Sciatic nerve (tissue), 2 donors: ENCODE measurements at regions of chr16 and their contacts with region 1.

Region 1: GRCh38 chr16:30429678-30430427 is at the start of gene DCTPP1:
- DNase-seq: peak; percentile 97
- ATAC-seq: peak; percentile 99
- total RNA-seq, gene DCTPP1: 20.4 TPM

Region 2: DNA sequence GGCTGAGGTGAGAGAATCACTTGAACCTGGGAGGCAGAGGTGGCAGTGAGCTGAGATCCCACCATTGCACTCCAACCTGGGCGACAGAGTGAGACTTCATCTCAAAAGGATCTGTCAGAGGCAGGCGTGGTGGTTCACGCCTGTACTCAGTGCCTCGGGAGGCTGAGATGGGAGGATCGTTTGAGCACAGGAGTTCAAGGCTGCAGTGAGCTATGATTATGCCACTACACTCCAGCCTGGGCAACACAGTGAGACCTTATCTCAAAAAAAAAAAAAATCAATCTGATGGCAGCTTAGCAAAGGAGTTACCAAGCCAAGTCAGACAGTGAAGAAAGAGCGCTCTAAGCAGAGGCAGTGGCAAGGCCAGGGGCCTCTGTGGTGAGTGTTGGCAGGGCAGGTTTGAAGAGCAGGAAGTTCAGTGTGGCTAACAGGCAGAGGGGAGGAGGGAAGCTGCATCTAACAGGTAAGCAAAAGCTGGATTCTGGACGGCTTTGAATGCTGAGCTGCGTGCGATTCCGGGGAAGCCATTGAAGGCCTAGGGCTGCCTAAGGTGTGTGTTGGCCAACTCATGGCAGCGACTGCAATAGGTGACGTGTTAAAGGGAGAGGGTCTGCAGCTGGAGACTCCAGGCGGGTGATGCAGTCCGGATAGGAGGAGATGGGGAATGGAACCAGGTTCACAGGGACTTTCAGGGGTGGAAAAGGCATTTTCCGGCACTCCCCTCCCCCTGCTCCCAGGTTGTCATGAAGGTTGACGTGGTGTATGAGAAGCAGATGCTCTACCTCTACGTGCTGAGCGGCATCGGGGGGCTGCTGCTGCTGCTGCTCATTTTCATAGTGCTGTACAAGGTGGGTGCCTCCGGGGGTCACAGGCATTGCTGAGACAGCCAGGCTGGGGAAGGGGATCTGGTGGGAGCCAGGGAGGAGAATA is 89.5 kb after region 1 on chr16:
- intact Hi-C with region 1: loop called (anchors 10 kb)
- DNase-seq: no peak
- ATAC-seq: no peak